ENCODE measurements at regions of chr17 and their contacts with region 1.

Region 1: GRCh38 chr17:77734341-77735080 is 224.0 kb upstream of the TNRC6C start:
- DNase-seq: peak; percentile 78
- H3K4me3 ChIP-seq: no peak overlapping the region
- H3K27ac ChIP-seq: peak overlapping the region; percentile 65 to 88 (median 82)
- H3K4me1 ChIP-seq: peaks cover 10 to 37% (median 18%) of the 10 kb centered on the region in 4 donors
- H3K27me3 ChIP-seq: peaks cover 35% of the 10 kb centered on the region
- CTCF ChIP-seq: no peak
- EP300 ChIP-seq: no peak
- POLR2A ChIP-seq: no peak

Region 2: GRCh38 chr17:77140166-77140878 is 594.2 kb before region 1 on chr17:
- in situ Hi-C with region 1: no loop called
- intact Hi-C with region 1: loop called (anchors 5 kb)
- DNase-seq: peak; percentile 100
- H3K4me3 ChIP-seq: peak overlapping the region; percentile 75 to 99 (median 90)
- H3K27ac ChIP-seq: peak overlapping the region; percentile 94 to 99 (median 95)
- H3K4me1 ChIP-seq: peaks cover 2 to 32% (median 8%) of the 10 kb centered on the region in 4 donors
- H3K27me3 ChIP-seq: no peaks in the 10 kb centered on the region
- CTCF ChIP-seq: peak in 1 of 5 experiments; percentile 50
- EP300 ChIP-seq: no peak
- POLR2A ChIP-seq: peak; percentile 96

Measured in transverse colon (tissue), 4 donors.